CD4-positive, alpha-beta memory T cell (primary cell): ENCODE measurements at regions of chr7 and their contacts with region 1.

Region 1: DNA sequence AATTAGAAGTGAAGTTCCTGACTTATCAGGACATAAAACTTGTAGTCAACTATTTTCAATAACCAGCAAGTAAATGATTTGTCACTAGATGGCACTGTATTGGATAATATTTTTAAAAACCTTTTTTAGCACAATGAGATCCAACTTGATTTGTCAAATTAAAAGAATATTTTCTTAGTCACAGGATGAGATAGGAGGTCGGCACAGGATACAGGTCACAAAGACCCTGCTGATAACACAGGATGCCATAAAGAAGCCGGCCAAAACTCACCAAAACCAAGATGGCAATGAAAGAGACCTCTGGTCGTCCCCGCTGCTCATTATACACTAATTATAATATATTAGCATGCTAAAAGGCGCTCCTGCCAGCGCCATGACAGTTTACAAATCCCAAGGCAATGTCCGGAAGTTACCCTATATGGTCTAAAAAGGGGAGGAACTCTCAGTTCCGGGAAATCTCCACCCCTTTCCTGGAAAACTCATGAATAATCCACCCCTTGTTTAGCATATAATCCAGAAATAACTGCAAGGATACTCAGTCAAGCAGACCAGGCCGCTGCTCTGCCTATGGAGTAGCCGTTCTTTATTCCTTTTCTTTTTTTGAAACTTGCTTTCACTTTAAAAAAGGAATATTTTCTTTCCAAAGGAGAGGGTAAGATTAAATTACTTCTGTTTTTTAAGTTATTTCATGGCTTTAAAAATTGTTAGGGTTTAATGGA is 255.7 kb upstream of the MKLN1 start:
- DNase-seq: no peak
- H3K4me3 ChIP-seq: no peak overlapping the region
- H3K4me3 Mint-ChIP-seq: peak overlapping the region in 6 of 8 donors; percentile 8 to 44 (median 34)
- H3K27ac ChIP-seq: no peak overlapping the region
- H3K27ac Mint-ChIP-seq: peak overlapping the region in 3 of 7 donors; percentile 44 to 89 (median 49)
- H3K4me1 ChIP-seq: peaks cover 90% of the 10 kb centered on the region
- H3K4me1 Mint-ChIP-seq: peaks cover 66 to 95% (median 83%) of the 10 kb centered on the region in 4 donors
- H3K27me3 ChIP-seq: no peaks in the 10 kb centered on the region
- H3K27me3 Mint-ChIP-seq: no peaks in the 10 kb centered on the region

Region 2: DNA sequence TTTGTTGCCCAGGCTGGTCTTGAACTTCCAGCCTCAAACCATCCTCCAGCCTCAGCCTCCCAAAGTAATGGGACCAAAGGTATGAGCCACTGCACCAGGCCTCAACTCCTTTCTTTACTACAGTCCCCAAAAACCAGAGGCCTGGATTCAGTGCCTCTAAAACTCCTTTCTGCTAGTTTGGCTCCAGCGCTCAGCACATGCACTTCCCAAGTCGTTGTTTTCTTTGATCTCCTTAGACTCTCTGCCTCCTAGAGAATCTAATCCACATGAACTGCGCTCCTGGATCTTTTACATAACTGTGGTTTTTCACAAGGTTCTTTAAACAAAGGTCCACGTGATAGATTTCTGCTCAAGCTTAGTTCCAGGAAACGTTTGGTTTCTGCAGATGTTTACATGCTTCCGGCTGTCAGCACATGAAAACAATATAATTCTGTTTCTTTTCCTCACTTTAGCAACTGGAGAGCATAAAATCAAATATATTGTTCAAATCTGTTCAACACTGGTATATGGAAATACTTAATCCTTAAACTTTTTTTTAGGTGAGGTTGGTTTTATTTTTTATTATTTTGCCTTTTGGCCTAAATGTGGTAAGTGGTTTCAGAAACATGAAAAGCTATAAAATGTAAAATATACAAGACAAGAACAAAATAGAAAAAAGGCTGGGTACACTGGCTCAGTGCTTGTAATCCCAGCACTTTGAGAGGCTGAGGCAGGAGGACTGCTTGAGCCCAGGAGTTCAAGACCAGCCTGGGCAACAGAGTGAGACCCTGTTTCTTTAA is 14.7 kb before region 1 on chr7:
- CTCF ChIA-PET with region 1: interaction called, 14 read pairs
- POLR2A ChIA-PET with region 1: interaction called, 6 read pairs
- intact Hi-C with region 1: loop called (anchors 2 kb)
- DNase-seq: peak; percentile 58 to 79 (median 70)
- H3K4me3 ChIP-seq: no peak overlapping the region
- H3K4me3 Mint-ChIP-seq: peak overlapping the region; percentile 49 to 93 (median 81)
- H3K27ac ChIP-seq: peak overlapping the region; percentile 64
- H3K27ac Mint-ChIP-seq: peak overlapping the region; percentile 92 to 100 (median 97)
- H3K4me1 ChIP-seq: peaks cover 95% of the 10 kb centered on the region
- H3K4me1 Mint-ChIP-seq: peaks cover 53 to 87% (median 68%) of the 10 kb centered on the region in 4 donors
- H3K27me3 ChIP-seq: no peaks in the 10 kb centered on the region
- H3K27me3 Mint-ChIP-seq: no peaks in the 10 kb centered on the region

Region 3: GRCh38 chr7:131117439-131117838 is 45.5 kb after region 1 on chr7:
- CTCF ChIA-PET with region 1: no interaction called
- POLR2A ChIA-PET with region 1: no interaction called
- intact Hi-C with region 1: no loop called
- DNase-seq: no peak
- H3K4me3 ChIP-seq: no peak overlapping the region
- H3K4me3 Mint-ChIP-seq: no peak overlapping the region
- H3K27ac ChIP-seq: no peak overlapping the region
- H3K27ac Mint-ChIP-seq: no peak overlapping the region
- H3K4me1 ChIP-seq: no peaks in the 10 kb centered on the region
- H3K4me1 Mint-ChIP-seq: peaks cover 0 to 7% (median 3%) of the 10 kb centered on the region in 4 donors
- H3K27me3 ChIP-seq: no peaks in the 10 kb centered on the region
- H3K27me3 Mint-ChIP-seq: no peaks in the 10 kb centered on the region

Region 4: DNA sequence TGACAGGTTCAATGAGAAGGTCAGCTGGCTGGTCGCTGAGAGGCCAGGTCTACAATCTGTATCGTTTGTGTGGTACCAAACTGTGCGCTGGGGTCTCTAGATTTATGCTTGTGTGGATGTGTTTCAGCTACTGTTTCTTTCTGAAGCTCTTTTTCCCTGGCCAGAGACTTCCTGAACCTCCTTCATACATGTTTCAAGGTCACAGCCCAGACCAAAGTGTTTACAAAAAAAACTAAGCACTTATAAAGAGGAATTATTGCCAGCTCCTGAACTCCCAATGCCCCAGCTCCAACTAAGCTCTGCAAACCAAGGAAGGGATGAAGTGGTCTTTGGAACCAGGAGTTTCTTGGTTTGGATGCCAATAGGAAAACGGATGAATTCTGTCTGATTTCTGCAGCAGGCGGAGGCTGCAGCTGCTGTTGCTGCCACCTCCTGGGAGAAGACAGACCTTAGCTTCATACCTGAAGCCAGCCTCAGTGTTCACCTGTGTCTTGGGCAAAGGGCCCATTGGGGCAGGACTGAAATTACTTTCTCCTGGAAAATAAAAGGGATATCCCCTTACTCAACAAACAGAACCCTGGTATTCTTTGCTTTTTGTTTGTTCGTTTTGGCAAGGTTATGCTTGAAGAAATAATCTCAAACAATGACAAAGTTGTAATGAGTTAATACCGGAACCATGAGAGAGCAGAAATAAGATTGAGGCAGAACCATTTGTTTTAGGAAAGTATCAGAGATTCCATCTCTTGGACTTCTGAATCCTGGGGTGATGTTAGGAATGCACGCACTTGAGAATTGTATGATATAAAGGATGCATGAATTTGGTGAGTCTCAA is 231.1 kb after region 1 on chr7:
- CTCF ChIA-PET with region 1: interaction called, 26 read pairs
- POLR2A ChIA-PET with region 1: interaction called, 4 read pairs
- intact Hi-C with region 1: loop called (anchors 1 kb)
- DNase-seq: peak in 4 of 5 donors; percentile 24 to 28 (median 25)
- H3K4me3 ChIP-seq: no peak overlapping the region
- H3K4me3 Mint-ChIP-seq: no peak overlapping the region
- H3K27ac ChIP-seq: no peak overlapping the region
- H3K27ac Mint-ChIP-seq: peak overlapping the region in 1 of 7 donors; percentile 25
- H3K4me1 ChIP-seq: no peaks in the 10 kb centered on the region
- H3K4me1 Mint-ChIP-seq: peaks cover 0 to 2% (median 0%) of the 10 kb centered on the region in 4 donors
- H3K27me3 ChIP-seq: no peaks in the 10 kb centered on the region
- H3K27me3 Mint-ChIP-seq: no peaks in the 10 kb centered on the region

Region 5: DNA sequence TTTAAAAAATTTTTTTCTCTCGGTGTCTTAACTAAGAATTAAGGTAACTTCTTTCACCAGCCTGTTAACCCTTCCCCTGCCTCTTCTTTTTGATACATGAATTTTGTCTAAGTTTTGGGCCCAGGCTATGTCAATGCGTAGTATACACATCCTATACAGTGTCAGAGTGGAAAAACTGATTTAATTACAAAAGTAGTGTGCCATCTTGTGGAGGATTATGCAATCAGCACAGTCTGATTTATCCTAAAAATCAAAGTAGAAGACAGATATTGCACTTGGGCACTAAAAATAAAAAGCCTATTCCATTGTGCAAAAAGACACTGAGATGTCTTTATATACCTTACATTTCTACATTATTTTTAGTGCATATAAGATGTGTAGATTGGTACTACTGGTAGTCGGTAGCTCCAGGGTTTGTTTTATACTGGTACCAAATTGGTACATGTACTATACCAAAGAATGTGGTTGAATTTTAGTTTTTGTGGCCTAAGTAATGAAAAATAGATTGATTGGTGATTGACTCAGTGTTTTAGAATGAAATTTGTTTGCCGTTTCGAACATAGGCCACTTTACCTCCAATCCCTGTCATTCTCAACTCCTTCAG is 352.4 kb after region 1 on chr7:
- CTCF ChIA-PET with region 1: interaction called, 5 read pairs
- POLR2A ChIA-PET with region 1: no interaction called
- intact Hi-C with region 1: loop called (anchors 1 kb)
- DNase-seq: peak; percentile 28 to 46 (median 34)
- H3K4me3 ChIP-seq: no peak overlapping the region
- H3K4me3 Mint-ChIP-seq: no peak overlapping the region
- H3K27ac ChIP-seq: no peak overlapping the region
- H3K27ac Mint-ChIP-seq: peak overlapping the region in 3 of 7 donors; percentile 9 to 47 (median 14)
- H3K4me1 ChIP-seq: no peaks in the 10 kb centered on the region
- H3K4me1 Mint-ChIP-seq: peaks cover 3 to 11% (median 6%) of the 10 kb centered on the region in 4 donors
- H3K27me3 ChIP-seq: no peaks in the 10 kb centered on the region
- H3K27me3 Mint-ChIP-seq: no peaks in the 10 kb centered on the region